ENCODE measurements at regions of chr7 and their contacts with region 1.

Region 1: DNA sequence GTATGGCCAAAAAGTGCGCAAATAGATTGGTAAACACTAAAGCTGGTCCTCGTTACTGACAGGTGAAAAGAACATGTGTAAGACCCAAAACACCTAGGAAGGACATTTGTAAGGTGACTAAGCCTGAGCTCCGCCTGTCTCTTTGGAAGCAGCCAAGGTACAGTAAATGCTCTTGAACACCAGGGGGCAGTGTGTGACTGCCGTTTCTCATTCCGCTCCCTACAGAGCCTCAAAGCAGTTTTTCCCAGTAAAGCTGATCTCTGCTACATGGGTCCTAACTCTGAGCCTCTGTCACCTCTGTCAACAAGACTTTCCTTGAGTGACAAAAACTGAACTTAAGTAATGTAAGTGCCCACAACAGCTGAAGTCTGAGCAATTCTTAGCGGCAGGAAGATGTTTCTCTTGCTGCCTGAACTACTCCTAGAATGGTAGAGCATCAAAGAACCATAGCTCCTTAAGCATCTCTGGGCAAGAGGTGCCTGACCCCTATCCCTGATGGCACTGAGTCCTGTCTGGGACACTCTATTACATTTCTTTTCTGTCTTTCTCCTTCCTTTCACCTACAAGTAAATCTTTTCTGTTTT is 238.0 kb upstream of the INHBA start:
- DNase-seq: peak; percentile 68
- H3K4me3 ChIP-seq: no peak overlapping the region
- H3K27ac ChIP-seq: no peak overlapping the region
- H3K4me1 ChIP-seq: peaks cover 0 to 29% (median 17%) of the 10 kb centered on the region in 4 donors
- H3K27me3 ChIP-seq: no peaks in the 10 kb centered on the region
- CTCF ChIP-seq: peak; percentile 78 to 89 (median 86)
- EP300 ChIP-seq: no peak
- POLR2A ChIP-seq: no peak

Region 2: DNA sequence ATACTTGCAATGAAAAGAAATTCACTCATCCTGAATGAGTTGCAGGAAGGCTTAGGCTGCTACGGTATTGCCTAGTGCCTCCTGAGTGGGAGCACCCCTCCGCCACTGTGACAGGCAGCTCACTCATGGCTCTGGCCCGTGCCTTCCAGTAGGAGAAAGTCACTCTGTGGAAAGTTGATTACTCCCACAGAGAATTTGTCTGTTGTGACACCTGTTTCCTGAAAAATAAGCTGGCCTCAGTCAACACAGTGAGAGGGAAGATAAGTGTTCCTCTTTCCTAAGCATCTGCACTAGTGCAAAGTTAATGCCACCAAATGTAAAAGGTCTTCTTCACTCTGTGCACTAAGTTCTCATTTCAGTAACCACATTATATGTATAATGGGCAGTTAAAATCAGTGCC is 79.2 kb before region 1 on chr7:
- in situ Hi-C with region 1: no loop called
- intact Hi-C with region 1: no loop called
- DNase-seq: no peak
- H3K4me3 ChIP-seq: no peak overlapping the region
- H3K27ac ChIP-seq: no peak overlapping the region
- H3K4me1 ChIP-seq: no peaks in the 10 kb centered on the region
- H3K27me3 ChIP-seq: no peaks in the 10 kb centered on the region
- CTCF ChIP-seq: no peak
- EP300 ChIP-seq: no peak
- POLR2A ChIP-seq: no peak

Region 3: DNA sequence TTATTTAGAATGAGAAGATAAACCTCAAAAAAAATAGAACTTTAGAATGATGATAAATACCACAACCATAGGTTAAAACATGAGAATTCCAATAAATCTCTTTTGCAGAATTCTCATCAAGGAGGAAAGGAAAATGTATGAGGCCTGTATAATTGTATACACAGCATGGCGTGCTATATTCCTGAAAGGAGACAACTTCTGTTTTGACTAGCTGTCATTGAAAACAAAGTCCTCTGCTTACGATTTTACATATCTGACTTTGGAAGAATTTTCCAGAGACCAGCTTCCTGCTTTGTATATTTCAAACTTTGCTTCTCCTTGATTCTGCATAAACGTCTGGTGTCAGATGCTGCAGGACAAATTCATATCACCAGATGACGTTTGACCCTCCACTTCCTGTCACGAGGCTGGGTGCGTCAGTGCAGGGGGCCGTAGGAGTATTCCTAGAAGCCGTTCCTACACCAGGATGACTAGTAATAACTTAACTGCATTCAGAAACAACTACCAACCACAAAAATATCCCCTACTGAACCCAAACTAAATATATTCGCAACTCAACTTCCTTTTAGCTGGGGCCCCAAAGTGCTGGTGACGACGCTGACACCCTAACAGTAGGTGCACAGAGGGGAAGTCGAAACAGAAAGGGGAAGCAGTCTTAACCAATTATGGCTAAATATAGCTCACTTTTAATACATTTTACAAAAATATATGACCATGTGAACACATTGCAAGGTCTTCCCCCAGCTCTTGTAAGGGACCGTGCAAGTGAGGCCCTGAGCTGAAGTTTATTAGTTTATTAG is 59.3 kb before region 1 on chr7:
- in situ Hi-C with region 1: no loop called
- intact Hi-C with region 1: no loop called
- DNase-seq: peak; percentile 46
- H3K4me3 ChIP-seq: no peak overlapping the region
- H3K27ac ChIP-seq: peak overlapping the region in 2 of 4 donors; percentile 11 to 35
- H3K4me1 ChIP-seq: peaks cover 6 to 15% (median 13%) of the 10 kb centered on the region in 4 donors
- H3K27me3 ChIP-seq: no peaks in the 10 kb centered on the region
- CTCF ChIP-seq: no peak
- EP300 ChIP-seq: no peak
- POLR2A ChIP-seq: no peak

Region 4: DNA sequence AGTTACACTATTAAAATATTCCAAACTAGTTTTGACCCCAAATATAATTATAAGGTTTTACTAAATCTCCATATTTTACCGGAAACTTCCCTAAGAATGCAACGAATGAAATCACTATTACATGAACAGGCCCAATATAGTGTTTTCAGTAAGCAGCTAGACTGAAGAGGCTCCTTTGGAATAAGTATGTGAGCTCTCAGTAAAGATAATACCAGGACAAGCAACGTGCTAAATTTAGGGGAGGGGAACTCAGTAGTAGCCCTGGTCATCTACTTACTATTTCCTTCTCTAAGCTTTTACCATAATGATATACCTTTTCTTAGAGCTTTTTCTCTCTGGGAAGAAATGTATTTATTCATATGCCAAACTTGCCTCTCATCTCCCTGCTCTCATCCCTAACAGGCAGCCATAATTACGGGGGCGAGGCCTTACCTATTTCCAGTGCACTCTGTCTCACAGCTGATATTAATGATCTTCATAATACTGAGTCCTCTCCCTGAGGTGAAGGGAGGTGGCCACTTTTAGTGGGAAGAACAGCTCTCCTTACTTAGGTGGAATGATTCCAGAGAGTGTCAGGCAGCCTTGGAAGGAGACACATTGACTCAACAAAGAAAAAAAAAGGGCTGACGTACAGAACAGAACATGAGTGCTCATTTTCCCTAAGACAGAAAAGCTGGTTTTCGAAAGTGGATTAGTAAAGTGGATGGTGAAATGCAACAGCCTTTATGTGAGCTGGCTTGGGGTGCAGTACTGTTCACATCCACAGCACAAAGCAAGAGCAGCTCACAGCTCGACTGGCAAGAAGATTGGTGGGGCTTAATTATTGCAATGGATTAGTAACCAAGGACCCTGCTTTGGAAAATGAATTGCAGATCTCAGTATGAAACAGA is 130.8 kb after region 1 on chr7:
- in situ Hi-C with region 1: no loop called
- intact Hi-C with region 1: loop called (anchors 5 kb)
- DNase-seq: no peak
- H3K4me3 ChIP-seq: no peak overlapping the region
- H3K27ac ChIP-seq: no peak overlapping the region
- H3K4me1 ChIP-seq: peaks cover 0 to 4% (median 0%) of the 10 kb centered on the region in 4 donors
- H3K27me3 ChIP-seq: no peaks in the 10 kb centered on the region
- CTCF ChIP-seq: peak in 3 of 5 experiments; percentile 17 to 28 (median 26)
- EP300 ChIP-seq: no peak
- POLR2A ChIP-seq: no peak

Region 5: DNA sequence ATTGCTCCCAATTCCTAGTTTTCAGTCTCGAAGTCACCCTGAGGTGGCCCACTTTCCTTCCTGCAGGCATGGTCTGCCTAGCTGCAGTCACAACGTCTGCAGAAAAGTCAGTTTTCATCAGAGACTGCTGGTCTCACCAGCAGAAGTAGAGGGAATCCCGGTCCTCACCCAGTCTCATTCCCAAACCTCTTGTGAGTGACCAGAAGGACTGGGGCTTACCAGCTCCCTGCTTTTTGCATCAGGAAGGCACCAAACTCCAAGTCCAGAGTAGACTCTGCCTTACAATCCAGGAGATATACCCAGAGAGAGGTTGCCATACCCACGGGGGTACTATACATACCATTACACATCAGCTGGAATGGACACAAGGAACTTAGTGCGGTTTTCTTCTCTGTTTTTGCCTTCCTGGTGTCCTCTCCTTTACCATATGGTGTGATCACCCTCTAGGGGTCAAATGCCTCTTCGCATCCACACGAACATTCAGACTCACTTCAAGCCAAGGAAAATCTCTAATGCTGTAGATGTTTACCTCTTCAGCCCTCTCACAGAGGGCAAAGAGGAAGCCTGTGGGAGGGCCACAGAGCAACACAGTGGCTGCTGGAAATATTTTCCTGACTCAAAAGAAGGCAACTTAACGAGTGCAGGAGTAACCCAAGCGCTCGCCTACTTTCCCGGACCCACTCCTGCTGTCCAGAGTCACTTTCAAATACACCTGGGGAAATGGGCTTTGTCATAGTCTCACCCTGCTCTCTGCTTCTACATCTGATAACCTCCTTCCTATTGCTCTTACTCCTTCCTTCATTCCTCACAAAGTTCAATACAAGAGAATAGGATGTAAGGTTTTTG is 750.2 kb after region 1 on chr7:
- in situ Hi-C with region 1: no loop called
- intact Hi-C with region 1: loop called (anchors 5 kb)
- DNase-seq: peak; percentile 12
- H3K4me3 ChIP-seq: no peak overlapping the region
- H3K27ac ChIP-seq: peak overlapping the region; percentile 1 to 46 (median 27)
- H3K4me1 ChIP-seq: peaks cover 0 to 24% (median 10%) of the 10 kb centered on the region in 4 donors
- H3K27me3 ChIP-seq: no peaks in the 10 kb centered on the region
- CTCF ChIP-seq: peak; percentile 24 to 47 (median 44)
- EP300 ChIP-seq: no peak
- POLR2A ChIP-seq: no peak

Region 6: GRCh38 chr7:42831718-42832431 is 891.0 kb after region 1 on chr7:
- in situ Hi-C with region 1: loop called (anchors 10 to 25 kb)
- intact Hi-C with region 1: no loop called
- DNase-seq: peak; percentile 20
- H3K4me3 ChIP-seq: no peak overlapping the region
- H3K27ac ChIP-seq: peak overlapping the region in 1 of 4 donors; percentile 40
- H3K4me1 ChIP-seq: peaks cover 0 to 12% (median 9%) of the 10 kb centered on the region in 4 donors
- H3K27me3 ChIP-seq: no peaks in the 10 kb centered on the region
- CTCF ChIP-seq: peak; percentile 37 to 60 (median 49)
- EP300 ChIP-seq: no peak
- POLR2A ChIP-seq: no peak

Region 7: DNA sequence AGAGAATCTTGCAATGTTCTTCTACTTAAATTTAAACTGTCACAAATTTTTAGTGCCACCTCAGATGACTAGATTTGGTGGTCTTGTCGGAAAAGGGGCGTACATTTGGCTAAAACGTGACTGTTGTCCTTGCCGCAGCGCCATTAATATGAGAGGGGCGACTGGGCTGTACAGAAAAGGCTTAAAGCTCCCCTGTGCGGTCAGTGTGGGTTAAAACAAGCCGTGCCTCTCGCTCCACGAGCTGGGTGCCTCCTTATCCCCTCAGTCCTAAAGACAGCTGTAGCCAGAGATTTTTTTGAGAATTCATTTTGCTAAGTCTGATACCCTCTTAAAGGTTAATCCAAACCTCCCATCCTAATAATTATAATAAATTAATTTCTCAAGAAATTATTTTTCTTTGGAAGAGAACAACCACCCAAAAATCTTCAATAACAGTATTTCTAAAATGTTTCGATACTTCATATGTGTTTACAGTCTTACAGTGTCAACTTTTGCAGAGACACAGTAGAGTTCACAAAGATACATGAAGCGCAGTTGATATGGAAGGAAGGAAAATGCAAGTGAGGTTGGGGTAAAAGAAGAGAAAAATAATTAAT is 902.5 kb after region 1 on chr7:
- in situ Hi-C with region 1: loop called (anchors 10 to 25 kb)
- intact Hi-C with region 1: loop called (anchors 2 kb)
- DNase-seq: peak; percentile 20
- H3K4me3 ChIP-seq: no peak overlapping the region
- H3K27ac ChIP-seq: no peak overlapping the region
- H3K4me1 ChIP-seq: peaks cover 0 to 5% (median 0%) of the 10 kb centered on the region in 4 donors
- H3K27me3 ChIP-seq: peaks cover 3% of the 10 kb centered on the region
- CTCF ChIP-seq: peak in 4 of 5 experiments; percentile 37 to 46 (median 40)
- EP300 ChIP-seq: no peak
- POLR2A ChIP-seq: no peak

Measured in transverse colon (tissue), 4 donors.